ENCODE measurements at regions of chr15 and their contacts with region 1.

Region 1: DNA sequence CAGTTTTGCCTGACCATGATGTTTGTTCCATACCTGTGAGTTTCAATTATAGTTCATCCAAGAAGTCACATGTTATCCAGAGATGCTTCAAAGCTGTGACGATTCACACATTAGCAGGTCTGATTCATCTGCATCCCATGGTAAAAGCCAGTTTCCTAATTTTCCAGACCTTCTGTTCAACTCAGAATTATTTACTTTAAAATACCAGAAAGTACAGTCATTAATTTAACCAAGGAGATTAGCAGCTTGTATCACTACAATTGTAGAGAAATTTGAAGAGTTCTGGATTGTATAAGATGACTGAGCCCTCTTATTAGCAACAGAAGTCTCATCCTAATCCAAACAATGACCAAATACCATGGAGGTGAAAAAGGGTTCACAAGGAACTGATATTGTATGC is 76.1 kb upstream of the THBS1 start:
- DNase-seq: no peak
- ATAC-seq: no peak
- H3K4me3 ChIP-seq: no peak overlapping the region
- H3K27ac ChIP-seq: no peak overlapping the region
- H3K4me1 ChIP-seq: 0 out of 2 replicates have a peak, but pooled peaks cover 3% of the 10 kb centered on the region
- H3K27me3 ChIP-seq: no peaks in the 10 kb centered on the region; a peak in 1 of 4 replicates
- CTCF ChIP-seq: no peak
- EP300 ChIP-seq: no peak
- POLR2A ChIP-seq: no peak
- RAD21 ChIP-seq: no peak

Region 2: DNA sequence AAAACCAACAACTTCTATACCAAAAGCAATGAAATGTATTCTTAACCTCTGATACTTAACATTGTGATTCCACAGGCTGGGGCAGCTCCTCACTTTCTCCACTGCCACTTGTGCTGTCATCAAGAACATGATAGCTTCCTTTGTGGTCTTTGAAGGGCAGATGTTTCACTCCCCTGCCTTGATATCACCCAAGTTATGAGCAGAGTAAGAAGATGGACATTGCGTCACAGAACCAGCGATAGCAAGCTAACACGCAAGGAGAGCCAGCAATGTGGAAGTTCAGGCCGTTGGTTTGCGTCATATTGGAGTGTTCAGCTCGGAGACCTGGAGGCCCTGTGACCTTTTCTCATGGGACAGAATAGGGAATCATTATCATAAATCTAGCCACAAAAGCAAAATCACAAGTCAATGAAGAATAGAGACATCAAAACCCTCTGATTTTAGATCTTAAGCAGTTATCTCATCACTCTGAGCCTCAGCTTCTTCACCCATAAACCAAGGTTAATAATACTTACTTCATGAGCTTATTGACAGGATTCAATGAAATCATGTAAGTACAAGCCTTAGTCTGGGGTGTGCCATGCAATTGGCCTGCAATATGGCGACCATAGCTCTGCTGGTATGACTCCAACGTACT is 107.7 kb before region 1 on chr15:
- CTCF ChIA-PET with region 1: no interaction called
- POLR2A ChIA-PET with region 1: no interaction called
- RAD21 ChIA-PET with region 1: no interaction called
- SMC1A ChIA-PET with region 1: no interaction called
- in situ Hi-C with region 1: no loop called
- intact Hi-C with region 1: no loop called
- DNase-seq: no peak
- ATAC-seq: no peak
- H3K4me3 ChIP-seq: no peak overlapping the region
- H3K27ac ChIP-seq: no peak overlapping the region
- H3K4me1 ChIP-seq: no peaks in the 10 kb centered on the region
- H3K27me3 ChIP-seq: no peaks in the 10 kb centered on the region
- CTCF ChIP-seq: no peak
- EP300 ChIP-seq: no peak
- POLR2A ChIP-seq: no peak
- RAD21 ChIP-seq: no peak

Region 3: GRCh38 chr15:39453500-39454073 is 51.2 kb before region 1 on chr15:
- CTCF ChIA-PET with region 1: no interaction called
- POLR2A ChIA-PET with region 1: no interaction called
- RAD21 ChIA-PET with region 1: no interaction called
- SMC1A ChIA-PET with region 1: no interaction called
- in situ Hi-C with region 1: no loop called
- intact Hi-C with region 1: no loop called
- DNase-seq: peak; percentile 31
- ATAC-seq: peak; percentile 93
- H3K4me3 ChIP-seq: no peak overlapping the region
- H3K27ac ChIP-seq: peak overlapping the region; percentile 46; the same call in 1 of the 2 replicates
- H3K4me1 ChIP-seq: peaks cover 5% of the 10 kb centered on the region; the same call in 1 of the 2 replicates
- H3K27me3 ChIP-seq: no peaks in the 10 kb centered on the region
- CTCF ChIP-seq: no peak
- EP300 ChIP-seq: peak; percentile 76 to 81; a peak in 3 of 4 replicates
- POLR2A ChIP-seq: no peak
- RAD21 ChIP-seq: no peak

Region 4: GRCh38 chr15:39494462-39494861 is 10.3 kb before region 1 on chr15:
- CTCF ChIA-PET with region 1: no interaction called
- POLR2A ChIA-PET with region 1: no interaction called
- RAD21 ChIA-PET with region 1: no interaction called
- SMC1A ChIA-PET with region 1: interaction called, 10 read pairs
- in situ Hi-C with region 1: no loop called
- intact Hi-C with region 1: no loop called
- DNase-seq: no peak
- ATAC-seq: peak; percentile 70
- H3K4me3 ChIP-seq: no peak overlapping the region
- H3K27ac ChIP-seq: no peak overlapping the region
- H3K4me1 ChIP-seq: no peaks in the 10 kb centered on the region
- H3K27me3 ChIP-seq: no peaks in the 10 kb centered on the region
- CTCF ChIP-seq: no peak
- EP300 ChIP-seq: peak in 1 of 2 experiments; percentile 20; a peak in 1 of 4 replicates
- POLR2A ChIP-seq: no peak
- RAD21 ChIP-seq: no peak

Region 5: GRCh38 chr15:39535466-39535865 is 30.7 kb after region 1 on chr15:
- CTCF ChIA-PET with region 1: no interaction called
- POLR2A ChIA-PET with region 1: no interaction called
- RAD21 ChIA-PET with region 1: no interaction called
- SMC1A ChIA-PET with region 1: no interaction called
- in situ Hi-C with region 1: no loop called
- intact Hi-C with region 1: no loop called
- DNase-seq: no peak
- ATAC-seq: no peak
- H3K4me3 ChIP-seq: no peak overlapping the region
- H3K27ac ChIP-seq: no peak overlapping the region
- H3K4me1 ChIP-seq: no peaks in the 10 kb centered on the region
- H3K27me3 ChIP-seq: no peaks in the 10 kb centered on the region
- CTCF ChIP-seq: no peak
- EP300 ChIP-seq: no peak
- POLR2A ChIP-seq: no peak
- RAD21 ChIP-seq: no peak

Region 6: DNA sequence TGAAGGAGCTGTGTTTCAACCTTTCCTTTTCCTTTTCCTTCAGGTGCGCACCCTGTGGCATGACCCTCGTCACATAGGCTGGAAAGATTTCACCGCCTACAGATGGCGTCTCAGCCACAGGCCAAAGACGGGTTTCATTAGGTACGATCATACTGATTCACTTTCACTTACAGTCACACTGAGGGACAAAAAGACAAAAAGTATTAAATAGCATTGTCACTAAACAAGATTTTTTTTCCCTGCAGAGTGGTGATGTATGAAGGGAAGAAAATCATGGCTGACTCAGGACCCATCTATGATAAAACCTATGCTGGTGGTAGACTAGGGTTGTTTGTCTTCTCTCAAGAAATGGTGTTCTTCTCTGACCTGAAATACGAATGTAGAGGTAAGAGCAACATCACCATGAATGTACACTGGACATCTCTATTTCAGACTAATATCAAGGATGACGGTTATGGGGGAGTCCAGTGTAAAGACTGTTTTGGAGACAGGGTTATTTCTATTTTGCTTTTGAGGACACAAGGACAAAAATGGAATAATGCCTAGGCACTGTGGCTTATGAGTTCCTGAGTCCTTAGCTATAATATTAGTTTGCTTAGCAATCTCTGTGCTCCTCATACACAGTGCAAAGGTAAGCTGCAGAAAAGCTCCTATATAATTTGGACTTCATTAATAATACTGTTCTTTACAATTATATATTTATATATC is 89.4 kb after region 1 on chr15:
- CTCF ChIA-PET with region 1: no interaction called
- POLR2A ChIA-PET with region 1: no interaction called
- RAD21 ChIA-PET with region 1: no interaction called
- SMC1A ChIA-PET with region 1: no interaction called
- in situ Hi-C with region 1: no loop called
- intact Hi-C with region 1: no loop called
- DNase-seq: no peak
- ATAC-seq: peak; percentile 56
- H3K4me3 ChIP-seq: no peak overlapping the region
- H3K27ac ChIP-seq: no peak overlapping the region
- H3K4me1 ChIP-seq: no peaks in the 10 kb centered on the region
- H3K27me3 ChIP-seq: no peaks in the 10 kb centered on the region
- CTCF ChIP-seq: peak in 2 of 3 experiments; percentile 23 to 41; a peak in 2 of 6 replicates
- EP300 ChIP-seq: no peak
- POLR2A ChIP-seq: no peak
- RAD21 ChIP-seq: peak; percentile 21; the same call in 1 of the 2 replicates

Measured in GM12878 (cell line).